Caco-2 (cell line): ENCODE measurements at regions of chr3 and their contacts with region 1.

Region 1: DNA sequence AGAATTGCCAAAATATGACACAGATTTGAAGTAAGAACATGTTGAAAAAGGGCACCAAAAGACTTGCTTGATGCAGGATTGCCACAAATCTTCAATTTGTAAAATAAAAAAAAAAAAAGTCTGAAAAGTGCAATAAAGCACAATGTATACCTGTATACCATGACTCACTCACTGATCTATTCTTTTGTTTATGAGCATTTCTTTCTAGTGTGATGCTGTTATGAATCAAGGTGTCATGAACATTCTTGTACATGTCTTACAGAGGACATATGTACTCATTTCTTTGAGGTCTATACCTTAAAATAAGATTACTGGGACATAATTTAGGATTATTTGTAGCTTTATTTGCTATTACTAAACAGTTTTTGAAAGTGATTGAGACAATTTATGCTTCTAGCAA is 464.9 kb upstream of the RBMS3 start:
- DNase-seq: no peak
- H3K4me3 ChIP-seq: no peak overlapping the region
- H3K4me3 Mint-ChIP-seq: no peak overlapping the region
- H3K27ac Mint-ChIP-seq: peak overlapping the region; percentile 58
- H3K4me1 ChIP-seq: no peaks in the 10 kb centered on the region
- H3K4me1 Mint-ChIP-seq: peaks cover 7% of the 10 kb centered on the region
- H3K27me3 ChIP-seq: no peaks in the 10 kb centered on the region
- H3K27me3 Mint-ChIP-seq: no peaks in the 10 kb centered on the region
- CTCF ChIP-seq: no peak

Region 2: GRCh38 chr3:28761375-28761774 is 54.6 kb before region 1 on chr3:
- CTCF ChIA-PET with region 1: no interaction called
- POLR2A ChIA-PET with region 1: no interaction called
- intact Hi-C with region 1: no loop called
- DNase-seq: no peak
- H3K4me3 ChIP-seq: no peak overlapping the region
- H3K4me3 Mint-ChIP-seq: no peak overlapping the region
- H3K27ac Mint-ChIP-seq: no peak overlapping the region
- H3K4me1 ChIP-seq: no peaks in the 10 kb centered on the region
- H3K4me1 Mint-ChIP-seq: no peaks in the 10 kb centered on the region
- H3K27me3 ChIP-seq: no peaks in the 10 kb centered on the region
- H3K27me3 Mint-ChIP-seq: peaks cover under 1% of the 10 kb centered on the region
- CTCF ChIP-seq: no peak

Region 3: DNA sequence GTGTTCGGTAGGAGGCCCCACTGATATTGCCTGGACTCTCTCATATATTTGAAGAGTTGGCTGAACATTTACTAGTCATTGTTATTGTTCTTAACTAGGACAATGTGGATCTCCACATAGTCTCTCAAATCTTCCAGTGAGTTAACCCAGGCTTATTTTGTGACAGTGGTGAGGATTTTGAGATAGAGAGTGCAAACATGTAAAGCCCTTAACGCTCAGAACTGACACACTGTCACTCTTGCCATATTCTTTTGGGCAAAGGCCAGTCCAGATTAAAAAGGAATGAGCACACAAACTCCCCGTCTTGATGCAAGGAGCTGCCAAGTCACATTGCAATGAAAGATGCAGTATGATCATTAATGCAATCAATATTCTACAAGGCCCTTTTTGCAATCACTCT is 35.5 kb before region 1 on chr3:
- CTCF ChIA-PET with region 1: no interaction called
- POLR2A ChIA-PET with region 1: no interaction called
- intact Hi-C with region 1: loop called (anchors 1 kb)
- DNase-seq: peak; percentile 33 to 41
- H3K4me3 ChIP-seq: no peak overlapping the region
- H3K4me3 Mint-ChIP-seq: no peak overlapping the region
- H3K27ac Mint-ChIP-seq: no peak overlapping the region
- H3K4me1 ChIP-seq: peaks cover 13% of the 10 kb centered on the region; the same call in 1 of the 2 replicates
- H3K4me1 Mint-ChIP-seq: peaks cover 7% of the 10 kb centered on the region
- H3K27me3 ChIP-seq: no peaks in the 10 kb centered on the region
- H3K27me3 Mint-ChIP-seq: no peaks in the 10 kb centered on the region
- CTCF ChIP-seq: no peak